ENCODE measurements at regions of chr10 and their contacts with region 1.

Region 1: GRCh38 chr10:113521123-113521795 is 31.6 kb upstream of the HABP2 start:
- DNase-seq: peak; percentile 75
- H3K4me3 ChIP-seq: no peak overlapping the region
- H3K27ac ChIP-seq: no peak overlapping the region
- H3K4me1 ChIP-seq: peaks cover 2% of the 10 kb centered on the region
- H3K27me3 ChIP-seq: no peaks in the 10 kb centered on the region
- CTCF ChIP-seq: peak; percentile 91 to 98 (median 96)
- POLR2A ChIP-seq: no peak

Region 2: DNA sequence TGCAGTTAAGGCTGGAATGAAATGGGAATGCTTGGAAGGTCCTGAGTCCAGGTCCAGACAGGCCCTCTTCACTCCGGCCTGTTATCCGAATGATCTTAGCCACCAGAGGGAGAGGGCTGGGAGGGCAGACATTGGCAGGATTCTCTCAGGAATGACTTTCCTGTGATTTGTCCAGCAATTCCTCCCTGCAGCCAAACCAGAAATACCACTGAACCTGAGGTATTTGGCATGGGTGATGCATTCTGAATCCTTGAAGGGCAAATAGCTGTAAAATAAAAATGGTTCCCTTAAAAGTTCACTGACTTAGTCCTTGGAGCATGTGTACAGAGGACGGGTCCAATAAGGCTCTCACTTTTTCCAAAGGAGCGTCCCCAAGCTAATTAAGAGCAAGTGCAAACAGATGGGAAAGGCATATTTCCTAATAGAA is 45.9 kb before region 1 on chr10:
- intact Hi-C with region 1: loop called (anchors 5 kb)
- DNase-seq: peak; percentile 77
- H3K4me3 ChIP-seq: no peak overlapping the region
- H3K27ac ChIP-seq: peak overlapping the region in 1 of 2 donors; percentile 4
- H3K4me1 ChIP-seq: peaks cover 8% of the 10 kb centered on the region
- H3K27me3 ChIP-seq: no peaks in the 10 kb centered on the region
- CTCF ChIP-seq: peak in 3 of 4 experiments; percentile 30 to 45 (median 43)
- POLR2A ChIP-seq: no peak

Region 3: DNA sequence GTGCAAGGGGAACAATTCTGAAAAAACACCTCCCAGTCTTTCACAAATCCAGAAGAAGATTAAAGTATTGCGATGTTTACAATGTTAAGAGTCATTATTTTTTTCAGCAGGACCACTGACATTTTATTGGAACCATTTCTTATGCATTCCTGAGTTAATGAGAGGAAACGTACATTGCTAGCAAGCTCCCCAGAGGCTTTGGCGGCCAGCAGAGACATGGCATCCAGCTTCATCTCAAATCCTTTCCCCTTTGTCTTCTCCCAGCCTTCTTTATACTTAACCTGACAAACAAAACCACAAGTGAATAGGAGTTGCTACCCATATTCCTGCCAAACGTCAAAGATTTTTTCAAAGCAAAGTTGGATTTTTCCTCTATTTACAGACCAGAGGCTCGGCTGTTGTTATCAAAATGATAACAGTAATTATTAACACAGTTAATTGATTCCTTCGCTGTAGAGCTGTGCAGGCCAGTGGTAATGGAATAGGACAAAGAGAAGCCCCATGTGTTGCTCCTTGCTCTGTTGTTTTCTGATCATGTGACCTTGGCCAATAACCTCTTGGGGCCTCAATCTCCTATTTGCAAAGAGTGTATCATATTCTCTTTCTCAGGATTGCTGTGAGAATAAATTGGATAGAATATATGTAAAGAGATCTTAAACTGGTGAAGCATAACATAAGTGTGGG is 110.6 kb after region 1 on chr10:
- intact Hi-C with region 1: no loop called
- DNase-seq: no peak
- H3K4me3 ChIP-seq: no peak overlapping the region
- H3K27ac ChIP-seq: no peak overlapping the region
- H3K4me1 ChIP-seq: no peaks in the 10 kb centered on the region
- H3K27me3 ChIP-seq: no peaks in the 10 kb centered on the region
- CTCF ChIP-seq: no peak
- POLR2A ChIP-seq: no peak